ENCODE measurements at regions of chr5 and their contacts with region 1.

Region 1: GRCh38 chr5:80960531-80961375 is 590 bp downstream of the RASGRF2 start:
- DNase-seq: peak; percentile 82
- H3K4me3 Mint-ChIP-seq: peak overlapping the region; percentile 70
- H3K27ac Mint-ChIP-seq: peak overlapping the region; percentile 65
- H3K4me1 Mint-ChIP-seq: peaks cover 50% of the 10 kb centered on the region
- H3K27me3 Mint-ChIP-seq: no peaks in the 10 kb centered on the region
- CTCF ChIP-seq: peak; percentile 53

Region 2: DNA sequence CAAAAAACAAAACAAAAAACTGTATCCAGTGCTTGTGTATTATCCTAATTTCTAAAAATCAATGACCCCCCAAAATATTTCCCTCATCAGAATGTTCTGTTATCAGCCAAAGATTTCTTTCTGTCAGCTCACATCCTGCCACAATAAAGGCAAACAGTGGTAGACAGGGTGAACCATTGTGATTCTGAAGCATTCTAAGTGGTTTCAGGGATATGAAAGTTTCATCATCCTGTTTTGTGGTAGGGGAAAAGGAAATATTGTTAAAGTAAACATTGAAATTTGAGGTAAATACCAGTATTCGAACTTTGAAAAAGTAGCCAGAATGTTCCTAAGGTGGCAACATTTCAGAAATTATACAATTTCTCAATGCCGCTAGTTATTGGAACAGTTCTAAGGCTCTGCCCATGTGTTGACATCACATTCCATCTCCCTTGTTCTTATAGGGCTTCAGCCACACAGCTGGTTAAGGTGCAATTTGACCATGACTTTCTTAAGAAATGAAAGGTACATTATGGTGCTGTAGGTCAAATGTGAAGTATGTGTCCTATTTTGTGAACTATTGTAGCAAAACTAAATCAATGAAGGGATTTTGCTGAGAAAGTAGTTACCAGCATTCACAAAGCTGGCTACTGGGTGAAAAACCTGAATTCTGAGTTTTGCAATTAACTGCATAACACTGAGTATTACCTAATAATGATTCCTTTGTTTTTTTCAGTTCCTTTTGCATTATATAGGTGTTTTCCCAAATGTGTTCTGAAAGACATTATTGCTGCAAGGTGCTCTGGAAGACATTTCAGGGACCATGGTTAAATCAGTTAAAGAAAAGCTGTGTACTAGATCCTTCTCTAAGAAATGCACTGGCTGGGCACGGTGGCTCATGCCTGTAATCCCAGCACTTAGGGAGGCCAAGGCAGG is 108.2 kb before region 1 on chr5:
- CTCF ChIA-PET with region 1: no interaction called
- intact Hi-C with region 1: loop called (anchors 5 kb)
- DNase-seq: no peak
- H3K4me3 Mint-ChIP-seq: no peak overlapping the region
- H3K27ac Mint-ChIP-seq: peak overlapping the region; percentile 78
- H3K4me1 Mint-ChIP-seq: peaks cover 12% of the 10 kb centered on the region
- H3K27me3 Mint-ChIP-seq: no peaks in the 10 kb centered on the region
- CTCF ChIP-seq: no peak

Region 3: DNA sequence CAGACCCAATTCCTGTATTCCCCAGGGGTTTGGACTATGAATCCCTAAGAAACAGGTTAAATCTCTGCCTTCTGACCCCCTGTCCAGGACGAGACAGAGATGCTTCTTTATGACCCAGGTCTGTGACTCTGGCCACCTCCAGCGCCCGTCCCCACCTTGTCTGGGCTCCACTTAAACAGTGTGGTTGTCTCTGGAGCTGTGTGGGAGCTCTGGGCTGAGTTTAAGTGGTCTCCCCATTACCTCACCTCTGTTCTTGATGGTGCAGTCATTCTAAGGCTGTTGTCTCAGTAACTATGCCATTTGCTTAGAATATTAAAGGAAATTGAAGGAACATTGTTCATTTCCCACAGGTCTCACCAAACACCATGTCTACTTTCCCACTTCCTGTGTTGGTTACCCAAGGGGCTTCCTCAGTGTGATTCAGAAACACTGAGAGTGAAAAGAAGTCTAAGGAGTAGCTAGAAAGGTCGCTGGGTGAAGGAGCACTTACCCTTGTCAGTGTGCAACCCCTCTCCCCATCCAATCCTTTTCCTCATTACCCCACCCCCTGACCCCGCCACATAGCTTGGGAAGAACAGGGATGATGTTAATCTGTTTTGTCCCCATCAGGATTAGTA is 144.6 kb after region 1 on chr5:
- CTCF ChIA-PET with region 1: interaction called, 5 read pairs
- intact Hi-C with region 1: loop called (anchors 1 kb)
- DNase-seq: no peak
- H3K4me3 Mint-ChIP-seq: no peak overlapping the region
- H3K27ac Mint-ChIP-seq: no peak overlapping the region
- H3K4me1 Mint-ChIP-seq: no peaks in the 10 kb centered on the region
- H3K27me3 Mint-ChIP-seq: no peaks in the 10 kb centered on the region
- CTCF ChIP-seq: no peak

Region 4: DNA sequence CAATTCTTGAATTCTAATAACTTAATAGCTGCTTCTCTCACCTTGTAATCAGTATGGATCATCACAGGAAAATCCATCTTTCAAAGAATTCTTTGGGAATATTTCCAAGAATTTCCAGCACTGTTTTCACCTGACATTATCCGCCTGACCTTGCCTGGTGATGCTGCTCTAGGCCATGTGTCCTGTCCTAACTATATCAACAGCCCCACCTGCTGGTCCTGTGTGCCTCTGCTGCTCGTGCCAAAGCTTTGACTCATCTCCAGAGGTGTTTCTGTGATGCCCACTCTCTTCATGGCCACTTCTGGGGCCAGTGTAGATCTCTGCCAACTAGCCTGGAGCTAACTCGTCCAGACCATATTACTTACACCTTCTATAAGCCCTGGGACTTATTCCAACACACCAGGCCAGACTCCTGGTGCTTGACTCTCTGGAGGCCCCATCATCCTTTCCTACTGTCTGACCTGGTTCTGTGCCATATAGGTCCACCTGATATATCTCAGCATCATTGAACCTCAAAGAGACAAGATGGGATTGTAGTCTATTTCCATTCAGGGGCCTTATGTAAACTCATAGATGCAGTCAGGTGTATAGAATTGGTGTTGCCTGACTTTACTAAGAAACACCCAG is 204.9 kb after region 1 on chr5:
- CTCF ChIA-PET with region 1: no interaction called
- intact Hi-C with region 1: loop called (anchors 10 kb)
- DNase-seq: peak; percentile 83
- H3K4me3 Mint-ChIP-seq: no peak overlapping the region
- H3K27ac Mint-ChIP-seq: no peak overlapping the region
- H3K4me1 Mint-ChIP-seq: peaks cover 18% of the 10 kb centered on the region
- H3K27me3 Mint-ChIP-seq: no peaks in the 10 kb centered on the region
- CTCF ChIP-seq: peak; percentile 77

Region 5: DNA sequence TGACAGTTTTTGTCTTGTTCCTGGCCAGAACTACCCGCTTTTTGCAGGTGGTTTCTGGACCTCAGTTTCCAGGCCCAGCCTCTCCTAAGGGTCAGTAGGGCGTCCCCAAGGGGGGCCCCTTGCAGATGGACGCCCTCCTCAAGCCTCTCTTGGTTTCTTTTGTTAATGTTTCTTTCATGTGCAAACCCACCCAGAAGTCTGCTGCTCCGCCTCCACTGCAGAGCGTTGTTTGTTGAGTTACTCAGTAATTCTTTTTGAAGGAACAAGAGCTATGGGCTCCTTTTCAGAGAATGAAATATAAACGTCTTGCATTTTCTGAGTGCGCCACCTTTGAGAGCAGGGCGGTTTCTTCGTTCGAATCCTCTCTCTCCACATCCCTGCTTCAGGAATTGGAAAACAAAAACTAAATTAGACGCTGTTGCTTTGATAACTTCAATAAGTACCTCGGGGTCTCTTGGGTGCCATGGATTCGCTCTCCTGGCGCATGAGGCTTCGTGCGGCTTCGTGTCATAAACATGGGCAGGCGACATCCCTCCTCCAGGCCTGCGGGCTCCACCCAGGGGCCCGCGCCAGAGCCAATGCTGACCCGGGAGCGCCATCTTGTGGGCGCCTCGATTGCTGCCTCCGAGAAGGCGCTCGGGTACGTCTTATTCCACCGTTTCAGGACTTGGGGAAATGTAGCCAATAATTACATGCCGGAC is 234.0 kb after region 1 on chr5:
- CTCF ChIA-PET with region 1: no interaction called
- intact Hi-C with region 1: loop called (anchors 10 kb)
- DNase-seq: peak; percentile 93
- H3K4me3 Mint-ChIP-seq: peak overlapping the region; percentile 10
- H3K27ac Mint-ChIP-seq: no peak overlapping the region
- H3K4me1 Mint-ChIP-seq: peaks cover 9% of the 10 kb centered on the region
- H3K27me3 Mint-ChIP-seq: no peaks in the 10 kb centered on the region
- CTCF ChIP-seq: peak; percentile 91